ENCODE measurements at regions of chr16 and their contacts with region 1.

Region 1: DNA sequence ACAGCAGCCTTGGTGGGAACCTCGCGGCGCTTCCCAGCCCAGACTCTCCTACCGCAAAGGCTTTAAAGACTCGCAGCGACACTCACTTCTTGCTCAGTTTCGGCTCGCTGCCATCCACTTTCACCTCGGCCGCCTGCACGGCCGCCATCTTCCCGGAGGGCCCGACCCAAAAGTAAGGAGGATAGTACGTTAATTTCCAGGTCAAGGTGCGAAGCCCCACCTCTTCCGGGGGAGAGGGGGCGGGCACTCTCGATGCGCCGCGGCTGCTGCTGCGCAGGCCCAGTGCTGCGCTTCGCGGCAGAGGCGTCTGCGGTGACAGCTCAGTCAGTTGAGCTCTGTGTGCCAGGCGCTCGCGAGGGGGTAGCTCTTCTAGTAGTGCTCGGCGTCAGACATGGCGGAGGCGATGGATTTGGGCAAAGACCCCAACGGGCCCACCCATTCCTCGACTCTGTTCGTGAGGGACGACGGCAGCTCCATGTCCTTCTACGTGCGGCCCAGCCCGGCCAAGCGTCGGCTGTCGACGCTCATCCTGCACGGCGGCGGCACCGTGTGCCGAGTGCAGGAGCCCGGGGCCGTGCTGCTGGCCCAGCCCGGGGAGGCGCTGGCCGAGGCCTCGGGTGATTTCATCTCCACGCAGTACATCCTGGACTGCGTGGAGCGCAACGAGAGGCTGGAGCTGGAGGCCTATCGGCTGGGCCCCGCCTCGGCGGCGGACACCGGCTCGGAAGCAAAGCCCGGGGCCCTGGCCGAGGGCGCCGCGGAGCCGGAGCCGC is at the starts of genes KARS1 and TERF2IP:
- DNase-seq: peak; percentile 94 to 96 (median 95)
- H3K4me3 ChIP-seq: peak within 1 kb of the TSS; percentile 79 to 99
- H3K4me3 Mint-ChIP-seq: peak within 1 kb of the TSS; percentile 94 to 100 (median 99)
- H3K27ac ChIP-seq: peak within 1 kb of the TSS; percentile 98
- H3K27ac Mint-ChIP-seq: peak within 1 kb of the TSS; percentile 95 to 99 (median 99)
- H3K4me1 ChIP-seq: peaks cover 71% of the 10 kb centered on the region
- H3K4me1 Mint-ChIP-seq: peaks cover 44 to 73% (median 59%) of the 10 kb centered on the region in 4 donors
- H3K27me3 ChIP-seq: no peaks in the 10 kb centered on the region
- H3K27me3 Mint-ChIP-seq: no peaks in the 10 kb centered on the region
- total RNA-seq, gene KARS1: 120 to 124 TPM
- total RNA-seq, gene TERF2IP: 98.4 to 108 TPM

Region 2: DNA sequence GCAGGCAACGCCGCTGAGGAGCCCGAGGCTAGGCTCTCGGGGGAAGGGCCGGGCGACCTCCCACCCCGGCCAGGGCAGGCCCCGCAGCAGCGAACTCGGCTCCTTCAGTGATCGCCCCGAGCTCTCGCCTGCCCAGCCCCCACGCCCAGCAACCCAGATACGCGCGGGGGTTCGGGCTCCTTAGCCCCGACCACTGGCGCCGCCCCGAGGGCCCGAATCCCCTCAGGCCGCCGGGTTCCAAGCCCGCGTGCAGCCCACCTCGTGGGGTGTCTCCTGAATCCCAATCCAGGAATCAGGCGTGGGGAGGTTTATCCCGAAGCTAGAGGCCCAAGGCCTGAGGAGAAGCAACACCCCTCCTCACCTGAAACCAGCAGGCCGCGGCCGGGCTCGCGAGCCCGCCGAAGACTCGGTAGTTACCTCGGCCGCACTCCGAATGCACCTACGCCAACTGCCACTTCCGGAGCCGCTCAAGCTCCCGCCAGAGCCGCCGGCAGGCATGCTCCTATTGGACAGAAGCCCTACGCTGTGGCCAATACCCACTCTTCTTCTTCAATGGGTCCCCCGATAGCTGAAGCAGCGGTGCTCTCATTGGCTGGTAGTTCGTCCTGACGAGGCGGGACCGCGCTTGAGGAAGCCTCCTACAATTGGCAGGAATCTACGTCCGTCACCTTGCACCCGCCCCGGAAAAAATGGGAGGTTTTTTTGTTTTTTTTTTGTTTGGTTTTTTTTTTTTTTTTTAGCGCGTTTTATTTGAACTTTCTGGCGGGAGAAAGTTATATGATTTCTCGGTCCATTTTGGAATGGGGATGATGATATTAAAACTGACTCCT is 981.0 kb before region 1 on chr16 and contains the start of gene RFWD3:
- CTCF ChIA-PET with region 1: no interaction called
- POLR2A ChIA-PET with region 1: interaction called, 5 read pairs
- intact Hi-C with region 1: loop called (anchors 2 kb)
- DNase-seq: peak; percentile 95 to 99 (median 98)
- H3K4me3 ChIP-seq: peak within 1 kb of the TSS; percentile 73 to 96
- H3K4me3 Mint-ChIP-seq: peak within 1 kb of the TSS; percentile 91 to 100 (median 96)
- H3K27ac ChIP-seq: peak within 1 kb of the TSS; percentile 89
- H3K27ac Mint-ChIP-seq: peak within 1 kb of the TSS; percentile 91 to 98 (median 96)
- H3K4me1 ChIP-seq: peaks cover 33% of the 10 kb centered on the region
- H3K4me1 Mint-ChIP-seq: peaks cover 20 to 52% (median 38%) of the 10 kb centered on the region in 4 donors
- H3K27me3 ChIP-seq: no peaks in the 10 kb centered on the region
- H3K27me3 Mint-ChIP-seq: no peaks in the 10 kb centered on the region
- total RNA-seq, gene RFWD3: 59.2 to 64.7 TPM

Region 3: DNA sequence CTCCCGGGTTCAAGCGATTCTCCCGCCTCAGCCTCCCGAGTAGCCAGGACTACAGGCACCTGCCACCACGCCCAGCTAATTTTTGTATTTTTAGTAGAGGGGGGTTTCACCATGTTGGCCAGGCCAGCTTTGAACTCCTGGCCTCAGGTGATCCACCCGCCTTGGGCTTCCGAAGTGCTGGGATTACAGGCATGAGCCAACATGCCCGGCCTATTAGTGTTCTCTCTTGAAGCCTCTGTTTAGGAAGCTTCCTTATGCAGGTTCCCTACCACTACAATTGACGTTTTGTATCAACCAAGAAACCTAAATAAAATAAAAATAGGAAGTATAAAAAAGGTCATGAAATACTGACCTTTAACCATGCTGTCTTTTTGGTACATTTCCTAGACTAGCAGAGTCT is 127.8 kb before region 1 on chr16:
- CTCF ChIA-PET with region 1: interaction called, 9 read pairs
- POLR2A ChIA-PET with region 1: interaction called, 49 read pairs
- intact Hi-C with region 1: loop called (anchors 1 kb)
- DNase-seq: no peak
- H3K4me3 ChIP-seq: no peak overlapping the region
- H3K4me3 Mint-ChIP-seq: no peak overlapping the region
- H3K27ac ChIP-seq: no peak overlapping the region
- H3K27ac Mint-ChIP-seq: no peak overlapping the region
- H3K4me1 ChIP-seq: peaks cover 8% of the 10 kb centered on the region
- H3K4me1 Mint-ChIP-seq: peaks cover 10 to 20% (median 16%) of the 10 kb centered on the region in 4 donors
- H3K27me3 ChIP-seq: no peaks in the 10 kb centered on the region
- H3K27me3 Mint-ChIP-seq: no peaks in the 10 kb centered on the region

Region 4: GRCh38 chr16:75614066-75614897 is 33.4 kb before region 1 on chr16:
- CTCF ChIA-PET with region 1: interaction called, 11 read pairs
- POLR2A ChIA-PET with region 1: interaction called, 293 read pairs
- intact Hi-C with region 1: no loop called
- DNase-seq: no peak
- H3K4me3 ChIP-seq: no peak overlapping the region
- H3K4me3 Mint-ChIP-seq: peak overlapping the region in 2 of 8 donors; percentile 54 to 57
- H3K27ac ChIP-seq: no peak overlapping the region
- H3K27ac Mint-ChIP-seq: peak overlapping the region in 6 of 7 donors; percentile 11 to 85 (median 38)
- H3K4me1 ChIP-seq: peaks cover 44% of the 10 kb centered on the region
- H3K4me1 Mint-ChIP-seq: peaks cover 22 to 41% (median 32%) of the 10 kb centered on the region in 4 donors
- H3K27me3 ChIP-seq: no peaks in the 10 kb centered on the region
- H3K27me3 Mint-ChIP-seq: no peaks in the 10 kb centered on the region

Region 5: DNA sequence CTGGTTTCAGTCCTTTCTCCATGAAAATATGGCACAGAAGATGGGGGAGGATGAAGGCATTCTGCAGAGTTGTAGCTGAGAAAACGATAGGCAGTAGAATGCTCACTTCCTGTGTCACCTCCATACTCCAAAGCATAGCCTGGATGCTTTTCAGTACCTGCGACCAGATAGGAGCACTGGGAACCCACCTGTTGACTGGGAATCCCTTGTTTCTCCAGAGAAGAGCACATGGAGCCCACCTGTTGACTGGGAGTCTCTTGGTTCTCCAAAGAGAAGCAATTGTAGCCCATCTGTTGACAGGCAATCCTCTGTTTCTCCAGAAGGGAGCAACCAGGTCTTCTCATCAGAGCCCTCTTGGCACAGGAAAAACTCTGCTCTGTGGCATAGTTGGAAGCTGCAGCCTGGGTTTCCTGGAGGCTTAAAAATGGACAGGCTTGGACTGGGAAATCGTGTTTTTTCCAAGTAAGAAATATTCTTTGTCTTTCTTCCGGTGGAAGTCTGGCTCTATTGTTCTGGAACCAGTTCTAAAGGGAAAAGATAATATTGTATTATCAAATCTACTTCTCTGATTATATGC is 13.1 kb after region 1 on chr16:
- CTCF ChIA-PET with region 1: interaction called, 4 read pairs
- POLR2A ChIA-PET with region 1: interaction called, 28 read pairs
- intact Hi-C with region 1: no loop called
- DNase-seq: no peak
- H3K4me3 ChIP-seq: no peak overlapping the region
- H3K4me3 Mint-ChIP-seq: no peak overlapping the region
- H3K27ac ChIP-seq: no peak overlapping the region
- H3K27ac Mint-ChIP-seq: peak overlapping the region in 3 of 7 donors; percentile 29 to 49 (median 47)
- H3K4me1 ChIP-seq: peaks cover 7% of the 10 kb centered on the region
- H3K4me1 Mint-ChIP-seq: peaks cover 9 to 17% (median 14%) of the 10 kb centered on the region in 4 donors
- H3K27me3 ChIP-seq: no peaks in the 10 kb centered on the region
- H3K27me3 Mint-ChIP-seq: no peaks in the 10 kb centered on the region

Region 6: GRCh38 chr16:76294396-76295214 is 646.9 kb after region 1 on chr16:
- CTCF ChIA-PET with region 1: no interaction called
- POLR2A ChIA-PET with region 1: no interaction called
- intact Hi-C with region 1: no loop called
- DNase-seq: no peak
- H3K4me3 ChIP-seq: no peak overlapping the region
- H3K4me3 Mint-ChIP-seq: no peak overlapping the region
- H3K27ac ChIP-seq: no peak overlapping the region
- H3K27ac Mint-ChIP-seq: no peak overlapping the region
- H3K4me1 ChIP-seq: no peaks in the 10 kb centered on the region
- H3K4me1 Mint-ChIP-seq: no peaks in the 10 kb centered on the region
- H3K27me3 ChIP-seq: no peaks in the 10 kb centered on the region
- H3K27me3 Mint-ChIP-seq: no peaks in the 10 kb centered on the region

Measured in CD4-positive, alpha-beta memory T cell (primary cell).